HepG2 (cell line): ENCODE measurements at regions of chr2 and their contacts with region 1.

Region 1: GRCh38 chr2:192162392-192163042 is 32.2 kb downstream of the TMEFF2 start:
- DNase-seq: peak; percentile 64
- ATAC-seq: peak; percentile 96
- H3K4me3 ChIP-seq: no peak overlapping the region
- H3K27ac ChIP-seq: no peak overlapping the region
- H3K4me1 ChIP-seq: no peaks in the 10 kb centered on the region
- H3K27me3 ChIP-seq: no peaks in the 10 kb centered on the region
- CTCF ChIP-seq: peak; percentile 89
- EP300 ChIP-seq: no peak
- POLR2A ChIP-seq: no peak
- RAD21 ChIP-seq: peak; percentile 93

Region 2: DNA sequence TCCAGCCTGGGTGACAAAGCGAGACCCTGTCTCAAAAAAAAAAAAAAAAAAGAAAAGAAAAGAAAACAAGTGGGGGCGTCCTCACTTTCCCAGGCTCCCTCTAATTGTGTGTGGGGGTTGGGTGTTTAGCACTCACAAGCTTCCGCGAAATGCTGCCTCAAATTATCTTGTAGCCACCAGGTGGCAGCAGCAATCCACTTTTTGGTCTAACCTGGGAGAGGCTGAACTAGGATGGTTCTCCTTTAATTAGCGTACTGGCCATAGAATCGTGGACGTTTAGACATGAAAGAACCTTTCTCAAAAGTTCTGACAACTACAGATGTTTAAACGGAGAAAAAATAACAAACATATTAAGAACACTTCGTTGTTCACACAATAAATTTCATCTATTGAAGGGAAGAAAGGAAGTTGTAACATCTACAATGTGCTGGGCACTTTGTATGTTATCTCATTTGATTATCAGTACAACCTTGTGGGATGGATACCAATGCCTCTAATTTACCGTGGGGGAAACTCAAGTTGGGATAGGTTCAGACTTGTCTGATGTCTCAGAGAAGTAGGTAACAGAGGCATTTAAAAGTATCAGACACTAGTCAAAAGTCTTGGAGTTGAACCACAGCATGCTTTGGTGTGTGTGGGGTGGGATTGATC is 607.3 kb before region 1 on chr2:
- CTCF ChIA-PET with region 1: interaction called, 5 read pairs
- POLR2A ChIA-PET with region 1: interaction called, 4 read pairs
- in situ Hi-C with region 1: loop called (anchors 5 kb)
- intact Hi-C with region 1: loop called (anchors 1 kb)
- DNase-seq: peak; percentile 73
- ATAC-seq: peak; percentile 97
- H3K4me3 ChIP-seq: no peak overlapping the region
- H3K27ac ChIP-seq: no peak overlapping the region
- H3K4me1 ChIP-seq: no peaks in the 10 kb centered on the region
- H3K27me3 ChIP-seq: peaks cover 0 to 7% of the 10 kb centered on the region in 2 experiments; a peak in 2 of 5 replicates
- CTCF ChIP-seq: peak; percentile 89
- EP300 ChIP-seq: no peak
- POLR2A ChIP-seq: no peak
- RAD21 ChIP-seq: peak; percentile 79

Region 3: GRCh38 chr2:191566344-191566743 is 596.2 kb before region 1 on chr2:
- CTCF ChIA-PET with region 1: no interaction called
- POLR2A ChIA-PET with region 1: no interaction called
- in situ Hi-C with region 1: no loop called
- intact Hi-C with region 1: loop called (anchors 1 kb)
- DNase-seq: peak; percentile 71
- ATAC-seq: peak; percentile 96
- H3K4me3 ChIP-seq: no peak overlapping the region
- H3K27ac ChIP-seq: no peak overlapping the region
- H3K4me1 ChIP-seq: peaks cover 11% of the 10 kb centered on the region
- H3K27me3 ChIP-seq: no peaks in the 10 kb centered on the region
- CTCF ChIP-seq: peak; percentile 88
- EP300 ChIP-seq: no peak
- POLR2A ChIP-seq: no peak
- RAD21 ChIP-seq: peak; percentile 75

Region 4: GRCh38 chr2:191758518-191759507 is 403.7 kb before region 1 on chr2:
- CTCF ChIA-PET with region 1: interaction called, 13 read pairs
- POLR2A ChIA-PET with region 1: no interaction called
- in situ Hi-C with region 1: no loop called
- intact Hi-C with region 1: loop called (anchors 1 kb)
- DNase-seq: peak; percentile 71
- ATAC-seq: peak; percentile 100
- H3K4me3 ChIP-seq: peak overlapping the region; percentile 7 to 47 (median 25); a peak in 4 of 6 replicates
- H3K27ac ChIP-seq: no peak overlapping the region
- H3K4me1 ChIP-seq: no peaks in the 10 kb centered on the region
- H3K27me3 ChIP-seq: no peaks in the 10 kb centered on the region; a peak in 1 of 5 replicates
- CTCF ChIP-seq: peak; percentile 89
- EP300 ChIP-seq: no peak
- POLR2A ChIP-seq: no peak
- RAD21 ChIP-seq: 0 out of 2 replicates have a peak, but pooled peaks have one; percentile 26

Region 5: GRCh38 chr2:191836853-191837769 is 325.4 kb before region 1 on chr2:
- CTCF ChIA-PET with region 1: interaction called, 7 read pairs
- POLR2A ChIA-PET with region 1: no interaction called
- in situ Hi-C with region 1: no loop called
- intact Hi-C with region 1: loop called (anchors 1 kb)
- DNase-seq: no peak
- ATAC-seq: no peak
- H3K4me3 ChIP-seq: no peak overlapping the region
- H3K27ac ChIP-seq: no peak overlapping the region
- H3K4me1 ChIP-seq: peaks cover 32% of the 10 kb centered on the region
- H3K27me3 ChIP-seq: no peaks in the 10 kb centered on the region
- CTCF ChIP-seq: no peak
- EP300 ChIP-seq: no peak
- POLR2A ChIP-seq: no peak
- RAD21 ChIP-seq: no peak

Region 6: DNA sequence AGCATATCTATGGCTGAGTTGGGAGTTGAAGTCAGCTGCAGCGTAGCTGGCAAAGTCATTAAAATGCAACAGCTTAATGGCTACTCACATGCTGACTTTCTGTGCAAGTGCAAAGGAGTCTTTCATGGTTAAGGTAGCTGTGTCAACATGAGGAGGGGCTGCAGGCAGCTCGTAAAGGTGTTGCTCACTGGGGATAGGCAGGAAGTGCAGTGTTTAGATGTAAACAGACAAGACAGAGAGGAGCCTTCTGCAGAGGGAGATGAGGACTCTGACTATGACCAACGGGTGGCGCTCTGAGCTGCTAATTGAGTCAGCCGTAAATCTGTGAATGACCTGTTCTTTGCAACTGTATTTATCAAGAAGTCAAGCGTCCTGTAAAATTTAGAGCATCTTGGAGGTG is 293.3 kb before region 1 on chr2:
- CTCF ChIA-PET with region 1: interaction called, 4 read pairs
- POLR2A ChIA-PET with region 1: no interaction called
- in situ Hi-C with region 1: no loop called
- intact Hi-C with region 1: loop called (anchors 1 kb)
- DNase-seq: peak; percentile 67
- ATAC-seq: peak; percentile 8; the same call in 1 of the 3 replicates
- H3K4me3 ChIP-seq: no peak overlapping the region
- H3K27ac ChIP-seq: peak overlapping the region; percentile 1
- H3K4me1 ChIP-seq: peaks cover 69% of the 10 kb centered on the region
- H3K27me3 ChIP-seq: no peaks in the 10 kb centered on the region
- CTCF ChIP-seq: peak; percentile 74
- EP300 ChIP-seq: peak in 1 of 2 experiments; percentile 64; a peak in 1 of 4 replicates
- POLR2A ChIP-seq: no peak
- RAD21 ChIP-seq: peak; percentile 38; the same call in 1 of the 2 replicates

Region 7: GRCh38 chr2:192029089-192029488 is 133.4 kb before region 1 on chr2:
- CTCF ChIA-PET with region 1: no interaction called
- POLR2A ChIA-PET with region 1: no interaction called
- in situ Hi-C with region 1: no loop called
- intact Hi-C with region 1: loop called (anchors 1 kb)
- DNase-seq: no peak
- ATAC-seq: peak; percentile 76
- H3K4me3 ChIP-seq: no peak overlapping the region
- H3K27ac ChIP-seq: no peak overlapping the region
- H3K4me1 ChIP-seq: no peaks in the 10 kb centered on the region
- H3K27me3 ChIP-seq: no peaks in the 10 kb centered on the region
- CTCF ChIP-seq: peak; percentile 31; the same call in 1 of the 2 replicates
- EP300 ChIP-seq: no peak
- POLR2A ChIP-seq: no peak
- RAD21 ChIP-seq: no peak